Activated T-helper 1 cell treated with anti-CD3 and anti-CD28 coated beads, Interleukin-12 subunit alpha, Interleukin-12 subunit beta, Interleukin-2, Interleukin-4 antibody, amounts not matched to agents 30 ng/mL and 10 ng/mL and 1 ng/mL, durations not matched to agents 14 hours and 24 hours and 36 hours (primary cell): ENCODE measurements at regions of chr2 and their contacts with region 1.

Region 1: DNA sequence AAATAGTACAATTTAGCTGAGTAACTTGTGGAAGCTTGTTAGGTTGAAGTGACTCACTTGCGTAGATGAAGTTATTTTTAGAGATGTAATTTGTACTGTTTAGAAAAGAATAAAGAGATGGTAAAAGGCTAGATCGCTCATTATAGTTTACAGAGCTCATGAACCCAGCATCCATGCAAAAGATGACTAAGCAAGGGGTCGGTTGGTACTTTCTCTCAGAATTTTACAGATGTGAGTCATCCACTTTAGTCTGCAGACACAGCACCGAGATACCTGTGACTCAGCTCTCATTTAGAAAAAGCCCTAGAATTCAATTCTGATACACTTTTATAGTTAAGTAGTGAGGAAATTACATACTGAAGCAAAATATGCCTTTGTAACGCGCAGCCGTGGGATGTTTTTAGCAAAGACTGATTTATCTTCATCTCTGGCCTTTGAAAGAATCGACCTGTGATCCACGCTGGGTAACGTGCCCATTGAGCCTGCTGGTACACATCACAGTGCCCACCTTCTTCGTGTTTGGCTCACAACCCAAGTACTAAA is 116.5 kb upstream of the FOSL2 start:
- DNase-seq: no peak
- H3K4me3 Mint-ChIP-seq: peak overlapping the region; percentile 41
- H3K27ac Mint-ChIP-seq: peak overlapping the region; percentile 30
- H3K4me1 Mint-ChIP-seq: peaks cover 61% of the 10 kb centered on the region
- H3K27me3 Mint-ChIP-seq: peaks cover 6% of the 10 kb centered on the region

Region 2: GRCh38 chr2:28359222-28360065 is 83.3 kb after region 1 on chr2:
- intact Hi-C with region 1: loop called (anchors 1 kb)
- DNase-seq: peak; percentile 84
- H3K4me3 Mint-ChIP-seq: peak overlapping the region; percentile 61
- H3K27ac Mint-ChIP-seq: peak overlapping the region; percentile 96
- H3K4me1 Mint-ChIP-seq: peaks cover 44% of the 10 kb centered on the region
- H3K27me3 Mint-ChIP-seq: peaks cover 10% of the 10 kb centered on the region